IMR-90 (cell line): ENCODE measurements at regions of chr7 and their contacts with region 1.

Region 1: GRCh38 chr7:92134271-92135051 is at the start of gene CYP51A1:
- DNase-seq: peak; percentile 86
- ATAC-seq: peak; percentile 90
- H3K4me3 ChIP-seq: peak within 1 kb of the TSS; percentile 80
- H3K27ac ChIP-seq: peak within 1 kb of the TSS; percentile 94
- H3K4me1 ChIP-seq: no peaks in the 10 kb centered on the region
- H3K27me3 ChIP-seq: no peaks in the 10 kb centered on the region
- CTCF ChIP-seq: no peak
- POLR2A ChIP-seq: peak; percentile 73
- RAD21 ChIP-seq: no peak
- total RNA-seq, gene CYP51A1: 76.4 and 92.8 TPM in 2 replicates

Region 2: GRCh38 chr7:91288208-91288824 is 846.1 kb before region 1 on chr7:
- CTCF ChIA-PET with region 1: no interaction called
- POLR2A ChIA-PET with region 1: no interaction called
- dilution Hi-C with region 1: no loop called
- in situ Hi-C with region 1: no loop called
- intact Hi-C with region 1: no loop called
- DNase-seq: no peak
- ATAC-seq: no peak
- H3K4me3 ChIP-seq: no peak overlapping the region
- H3K27ac ChIP-seq: no peak overlapping the region
- H3K4me1 ChIP-seq: peaks cover 2% of the 10 kb centered on the region
- H3K27me3 ChIP-seq: peaks cover 5% of the 10 kb centered on the region
- CTCF ChIP-seq: 0 out of 2 replicates have a peak, but pooled peaks have one; percentile 8
- POLR2A ChIP-seq: no peak
- RAD21 ChIP-seq: no peak

Region 3: DNA sequence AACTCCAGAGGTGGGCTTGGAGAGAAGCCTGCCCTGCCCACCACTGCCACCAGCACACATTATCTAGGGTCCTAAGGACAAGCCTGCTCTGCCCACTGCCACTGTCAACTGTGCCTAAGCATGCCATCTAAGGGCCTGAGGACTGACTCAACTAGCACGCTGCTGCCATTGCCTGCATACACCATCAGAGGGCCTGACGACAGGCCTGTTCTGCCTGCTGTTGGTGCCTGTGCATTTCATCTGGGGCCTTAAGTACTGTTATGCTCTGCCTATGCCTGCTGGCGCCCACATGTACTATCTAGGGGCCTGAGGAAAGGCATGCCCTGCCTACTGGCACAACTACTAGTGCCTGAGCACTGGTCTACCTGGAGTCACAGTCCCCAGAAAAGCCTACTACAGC is 71.6 kb after region 1 on chr7:
- CTCF ChIA-PET with region 1: no interaction called
- POLR2A ChIA-PET with region 1: no interaction called
- dilution Hi-C with region 1: no loop called
- in situ Hi-C with region 1: no loop called
- intact Hi-C with region 1: loop called (anchors 5 kb)
- DNase-seq: no peak
- ATAC-seq: no peak
- H3K4me3 ChIP-seq: no peak overlapping the region
- H3K27ac ChIP-seq: no peak overlapping the region
- H3K4me1 ChIP-seq: no peaks in the 10 kb centered on the region
- H3K27me3 ChIP-seq: no peaks in the 10 kb centered on the region
- CTCF ChIP-seq: no peak
- POLR2A ChIP-seq: no peak
- RAD21 ChIP-seq: no peak